AG04449 (cell line): ENCODE measurements at regions of chr5 and their contacts with region 1.

Region 1: GRCh38 chr5:139439013-139439903 is at the start of gene DNAJC18:
- DNase-seq: no peak
- H3K4me3 ChIP-seq: peak within 1 kb of the TSS; percentile 91
- CTCF ChIP-seq: no peak

Region 2: DNA sequence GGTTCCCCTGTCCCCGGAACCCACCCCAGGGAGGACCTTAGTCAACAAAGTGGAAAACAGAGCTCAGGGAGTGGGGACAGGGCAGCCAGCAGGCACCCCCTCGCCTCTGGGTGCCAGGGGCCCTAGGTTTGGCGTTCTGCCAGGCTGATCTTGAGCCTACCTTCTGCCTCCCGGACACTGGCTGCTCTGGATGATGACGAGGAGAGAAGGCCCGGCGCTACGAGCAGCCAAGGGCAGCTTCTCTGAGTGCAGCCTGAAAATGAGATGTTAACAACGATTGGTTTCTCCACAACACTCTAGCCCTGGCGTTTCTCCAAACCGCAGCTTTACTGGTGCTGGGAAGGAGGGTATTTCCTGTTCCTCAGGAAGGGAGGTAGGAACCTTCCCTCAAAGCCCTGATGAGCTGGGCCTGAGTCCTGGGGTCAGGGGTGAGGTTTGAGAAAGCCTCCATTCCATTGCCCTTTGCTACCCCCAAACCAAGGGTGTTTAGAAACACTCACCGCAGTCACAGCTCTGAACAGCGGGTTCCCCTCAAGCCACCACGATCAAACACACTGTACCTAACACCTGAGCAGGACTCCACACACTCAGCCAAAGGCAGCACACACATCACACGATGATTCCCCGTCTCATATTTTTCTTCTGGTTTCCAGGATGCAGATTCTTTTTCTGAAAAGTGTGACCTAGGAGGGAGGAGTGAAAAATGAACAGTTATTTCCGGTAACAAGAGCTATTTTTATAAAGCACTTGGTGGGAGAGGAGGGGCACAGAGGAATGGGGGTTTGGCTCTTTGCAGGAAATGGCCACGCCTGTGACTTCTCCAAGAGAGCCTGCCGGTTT is 43.0 kb after region 1 on chr5 and contains the start of gene STING1:
- CTCF ChIA-PET with region 1: interaction called, 5 read pairs
- POLR2A ChIA-PET with region 1: interaction called, 11 read pairs
- DNase-seq: peak; percentile 87
- H3K4me3 ChIP-seq: peak within 1 kb of the TSS; percentile 71
- CTCF ChIP-seq: no peak